Activated naive CD4-positive, alpha-beta T cell treated with anti-CD3 and anti-CD28 coated beads for 36 hours (primary cell): ENCODE measurements at regions of chr3 and their contacts with region 1.

Region 1: GRCh38 chr3:160038862-160039562 is 50.4 kb downstream of the IL12A start:
- DNase-seq: no peak
- H3K4me3 Mint-ChIP-seq: no peak overlapping the region
- H3K27ac Mint-ChIP-seq: no peak overlapping the region
- H3K4me1 Mint-ChIP-seq: peaks cover 4% of the 10 kb centered on the region
- H3K27me3 Mint-ChIP-seq: peaks cover 38% of the 10 kb centered on the region

Region 2: DNA sequence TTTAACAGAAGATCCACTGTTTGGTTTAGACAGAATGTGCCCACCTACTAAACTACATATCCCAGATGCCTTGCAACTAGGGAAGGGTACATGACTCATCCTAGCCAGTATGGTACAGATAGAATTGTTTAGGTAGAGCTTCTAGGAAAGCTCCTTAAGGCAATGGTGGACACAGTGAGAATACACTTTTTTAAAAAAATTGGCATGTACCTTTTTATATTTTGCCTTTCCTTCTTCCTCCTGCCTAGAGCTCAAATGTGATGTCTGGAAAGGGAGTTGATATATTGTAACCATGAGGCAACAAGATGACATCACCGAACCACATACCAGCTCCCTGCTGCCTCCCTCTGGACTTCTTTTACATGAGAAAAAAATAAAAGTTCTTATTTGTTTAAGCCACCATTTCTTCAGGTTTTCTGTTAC is 171.8 kb after region 1 on chr3:
- CTCF ChIA-PET with region 1: no interaction called
- intact Hi-C with region 1: no loop called
- DNase-seq: no peak
- H3K4me3 Mint-ChIP-seq: no peak overlapping the region
- H3K27ac Mint-ChIP-seq: no peak overlapping the region
- H3K4me1 Mint-ChIP-seq: no peaks in the 10 kb centered on the region
- H3K27me3 Mint-ChIP-seq: peaks cover 20% of the 10 kb centered on the region

Region 3: GRCh38 chr3:160225176-160226025 is 186.4 kb after region 1 on chr3 and contains the start of gene C3orf80:
- CTCF ChIA-PET with region 1: no interaction called
- intact Hi-C with region 1: loop called (anchors 5 kb)
- DNase-seq: peak; percentile 57
- H3K4me3 Mint-ChIP-seq: peak within 1 kb of the TSS; percentile 66
- H3K27ac Mint-ChIP-seq: no peak within 1 kb of the TSS
- H3K4me1 Mint-ChIP-seq: peaks cover 9% of the 10 kb centered on the region
- H3K27me3 Mint-ChIP-seq: peaks cover 49% of the 10 kb centered on the region
- total RNA-seq, gene C3orf80: not detected